HepG2 (cell line): ENCODE measurements at regions of chr5 and their contacts with region 1.

Region 1: DNA sequence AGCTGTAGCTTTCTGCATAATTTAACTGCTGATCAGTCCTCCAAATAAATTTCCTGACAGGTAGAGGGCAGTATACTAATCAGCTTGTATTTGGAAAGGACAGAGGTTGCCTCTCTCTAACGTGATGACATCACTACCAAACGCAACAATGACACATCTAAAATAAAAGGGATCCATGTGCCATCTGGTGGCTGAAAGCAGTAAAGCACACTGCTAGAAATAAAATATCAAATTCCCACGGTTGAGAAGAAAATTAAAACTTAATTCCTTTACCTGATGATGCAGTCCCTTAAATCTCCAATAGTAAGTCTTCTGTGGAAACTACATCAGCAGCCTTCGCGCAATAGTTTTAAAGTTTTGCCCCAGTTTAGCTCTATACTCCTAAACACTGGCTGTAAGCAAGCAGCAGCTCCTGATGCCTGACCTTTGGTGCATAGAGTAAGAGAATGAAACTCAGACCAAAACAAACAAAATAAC is 54.5 kb downstream of the DIAPH1 start:
- DNase-seq: peak; percentile 95
- ATAC-seq: peak; percentile 85
- H3K4me3 ChIP-seq: no peak overlapping the region
- H3K27ac ChIP-seq: peak overlapping the region; percentile 67
- H3K4me1 ChIP-seq: peaks cover 10% of the 10 kb centered on the region
- H3K27me3 ChIP-seq: no peaks in the 10 kb centered on the region
- CTCF ChIP-seq: peak; percentile 78
- EP300 ChIP-seq: no peak
- POLR2A ChIP-seq: no peak
- RAD21 ChIP-seq: peak; percentile 56; the same call in 1 of the 2 replicates

Region 2: DNA sequence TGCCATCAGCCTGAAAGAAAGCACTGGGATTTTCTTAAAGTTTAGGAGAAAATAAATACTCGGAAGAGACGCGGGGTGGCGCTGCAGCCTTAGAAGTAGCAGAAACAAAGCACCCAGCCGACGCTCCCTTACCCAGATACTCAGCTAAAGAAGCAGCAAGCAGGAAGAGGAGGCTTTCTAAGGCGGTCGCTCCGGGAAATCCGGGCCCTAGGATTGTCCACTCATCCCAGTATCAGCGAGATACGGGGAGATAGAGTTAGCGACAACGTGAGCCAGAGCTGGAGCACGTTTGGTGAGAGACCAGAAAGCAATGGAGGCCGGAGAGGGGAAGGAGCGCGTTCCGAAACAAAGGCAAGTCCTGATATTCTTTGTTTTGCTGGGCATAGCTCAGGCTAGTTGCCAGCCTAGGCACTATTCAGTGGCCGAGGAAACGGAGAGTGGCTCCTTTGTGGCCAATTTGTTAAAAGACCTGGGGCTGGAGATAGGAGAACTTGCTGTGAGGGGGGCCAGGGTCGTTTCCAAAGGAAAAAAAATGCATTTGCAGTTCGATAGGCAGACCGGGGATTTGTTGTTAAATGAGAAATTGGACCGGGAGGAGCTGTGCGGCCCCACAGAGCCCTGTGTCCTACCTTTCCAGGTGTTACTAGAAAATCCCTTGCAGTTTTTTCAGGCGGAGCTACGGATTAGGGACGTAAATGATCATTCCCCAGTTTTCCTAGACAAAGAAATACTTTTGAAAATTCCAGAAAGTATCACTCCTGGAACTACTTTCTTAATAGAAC is 469.6 kb before region 1 on chr5 and contains the start of gene PCDHB2:
- CTCF ChIA-PET with region 1: no interaction called
- POLR2A ChIA-PET with region 1: interaction called, 4 read pairs
- in situ Hi-C with region 1: loop called (anchors 10 kb)
- intact Hi-C with region 1: loop called (anchors 5 kb)
- DNase-seq: peak; percentile 79
- ATAC-seq: peak; percentile 98
- H3K4me3 ChIP-seq: peak within 1 kb of the TSS; percentile 55 to 89 (median 82)
- H3K27ac ChIP-seq: peak within 1 kb of the TSS; percentile 56
- H3K4me1 ChIP-seq: peaks cover 11% of the 10 kb centered on the region
- H3K27me3 ChIP-seq: no peaks in the 10 kb centered on the region; a peak in 1 of 5 replicates
- CTCF ChIP-seq: peak; percentile 87
- EP300 ChIP-seq: no peak
- POLR2A ChIP-seq: peak; percentile 59 to 69
- RAD21 ChIP-seq: peak; percentile 69
- total RNA-seq, gene PCDHB2: 3.6 and 7.1 TPM in 2 replicates

Region 3: DNA sequence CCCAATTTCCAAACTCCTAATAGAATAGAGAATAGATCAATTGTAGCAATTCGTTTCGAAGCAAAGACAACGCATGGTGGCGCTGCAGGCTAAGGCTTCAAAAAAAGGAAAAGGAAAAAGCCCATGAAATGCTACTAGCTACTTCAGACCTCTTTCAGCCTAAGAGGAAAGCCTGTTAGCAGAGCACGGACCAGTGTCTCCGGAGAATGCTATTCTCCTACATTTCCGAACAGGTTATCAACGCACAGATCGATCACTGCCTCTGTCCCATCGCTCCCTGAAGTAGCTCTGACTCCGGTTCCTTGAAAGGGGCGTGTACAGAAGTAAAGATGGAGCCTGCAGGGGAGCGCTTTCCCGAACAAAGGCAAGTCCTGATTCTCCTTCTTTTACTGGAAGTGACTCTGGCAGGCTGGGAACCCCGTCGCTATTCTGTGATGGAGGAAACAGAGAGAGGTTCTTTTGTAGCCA is 319.0 kb before region 1 on chr5 and contains the start of gene PCDHB15:
- CTCF ChIA-PET with region 1: interaction called, 12 read pairs
- POLR2A ChIA-PET with region 1: no interaction called
- in situ Hi-C with region 1: no loop called
- intact Hi-C with region 1: no loop called
- DNase-seq: peak; percentile 9
- ATAC-seq: peak; percentile 54
- H3K4me3 ChIP-seq: peak within 1 kb of the TSS; percentile 28 to 58 (median 36)
- H3K27ac ChIP-seq: no peak within 1 kb of the TSS
- H3K4me1 ChIP-seq: no peaks in the 10 kb centered on the region
- H3K27me3 ChIP-seq: no peaks in the 10 kb centered on the region; a peak in 1 of 5 replicates
- CTCF ChIP-seq: peak; percentile 56
- EP300 ChIP-seq: no peak
- POLR2A ChIP-seq: no peak
- RAD21 ChIP-seq: no peak
- total RNA-seq, gene PCDHB15: 0.22 and 0.27 TPM in 2 replicates

Region 4: DNA sequence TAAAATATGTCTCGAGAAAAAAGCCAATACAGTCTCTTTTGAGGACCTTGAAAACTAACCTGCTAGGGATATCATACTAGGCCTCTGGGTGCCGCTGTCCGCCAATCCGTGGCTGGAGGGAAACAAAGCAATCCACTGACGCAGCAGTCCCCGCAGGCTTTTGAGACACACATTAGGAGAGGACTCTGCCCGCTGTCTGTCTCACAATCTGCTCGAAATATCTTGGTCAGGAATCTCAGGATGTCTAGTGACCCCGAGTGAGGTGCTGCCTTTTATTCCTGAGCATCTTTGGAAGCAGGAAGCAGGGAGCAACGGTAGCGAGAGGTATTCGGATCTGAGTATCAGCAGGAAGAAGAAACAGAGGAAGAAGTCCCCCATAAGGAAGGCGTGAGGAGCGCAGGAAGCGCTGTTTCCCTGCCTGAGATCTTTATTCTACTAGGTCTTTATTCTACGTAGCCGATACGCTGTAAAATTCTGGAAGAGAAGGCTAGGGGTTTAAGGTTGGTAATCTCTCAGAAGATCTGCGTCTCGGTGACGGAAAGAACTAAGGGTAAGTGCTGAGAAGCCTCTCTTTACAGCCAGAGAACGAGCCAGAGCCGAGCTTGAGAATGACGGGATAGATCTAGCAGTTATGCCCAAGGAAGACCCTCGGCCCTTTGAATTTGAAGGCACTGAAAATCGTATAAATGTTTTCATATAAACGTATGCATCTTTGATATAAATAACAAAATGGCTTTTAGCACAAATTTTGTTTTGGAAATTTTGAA is 238.0 kb before region 1 on chr5:
- CTCF ChIA-PET with region 1: interaction called, 9 read pairs
- POLR2A ChIA-PET with region 1: interaction called, 12 read pairs
- in situ Hi-C with region 1: no loop called
- intact Hi-C with region 1: loop called (anchors 5 kb)
- DNase-seq: peak; percentile 58
- ATAC-seq: peak; percentile 89
- H3K4me3 ChIP-seq: peak overlapping the region; percentile 32 to 58 (median 54); a peak in 5 of 6 replicates
- H3K27ac ChIP-seq: no peak overlapping the region
- H3K4me1 ChIP-seq: peaks cover 18% of the 10 kb centered on the region
- H3K27me3 ChIP-seq: peaks cover 0 to 9% of the 10 kb centered on the region in 2 experiments; a peak in 2 of 5 replicates
- CTCF ChIP-seq: peak; percentile 77
- EP300 ChIP-seq: no peak
- POLR2A ChIP-seq: peak in 1 of 2 experiments; percentile 39; a peak in 1 of 4 replicates
- RAD21 ChIP-seq: 0 out of 2 replicates have a peak, but pooled peaks have one; percentile 24

Region 5: GRCh38 chr5:141412854-141413539 is 151.3 kb before region 1 on chr5 and contains the start of gene PCDHGA10:
- CTCF ChIA-PET with region 1: interaction called, 6 read pairs
- POLR2A ChIA-PET with region 1: no interaction called
- in situ Hi-C with region 1: loop called (anchors 5 kb)
- intact Hi-C with region 1: loop called (anchors 1 kb)
- DNase-seq: peak; percentile 15
- ATAC-seq: peak; percentile 75
- H3K4me3 ChIP-seq: no peak within 1 kb of the TSS
- H3K27ac ChIP-seq: no peak within 1 kb of the TSS
- H3K4me1 ChIP-seq: no peaks in the 10 kb centered on the region
- H3K27me3 ChIP-seq: no peaks in the 10 kb centered on the region
- CTCF ChIP-seq: peak; percentile 59
- EP300 ChIP-seq: no peak
- POLR2A ChIP-seq: no peak
- RAD21 ChIP-seq: no peak
- total RNA-seq, gene PCDHGA10: 0.06 and 0.18 TPM in 2 replicates

Region 6: DNA sequence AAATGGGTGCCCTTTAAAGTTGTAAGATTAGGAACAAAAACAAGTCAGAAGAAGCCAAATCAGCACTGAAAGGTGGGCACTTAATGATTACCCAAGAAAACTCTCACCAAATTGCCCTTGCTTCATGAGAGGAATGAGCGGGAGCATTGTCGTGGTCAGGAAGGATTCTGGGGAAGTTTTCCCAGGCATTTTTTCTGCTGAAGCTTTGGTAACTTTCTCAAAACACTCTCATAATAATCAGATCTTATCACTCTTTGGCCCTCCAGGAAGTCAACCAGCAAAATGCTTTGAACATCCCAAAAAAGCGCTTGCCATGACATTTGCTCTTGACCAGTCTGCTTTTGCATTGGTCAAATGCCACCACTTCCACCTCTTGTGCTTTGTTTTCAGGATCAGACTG is 98.9 kb before region 1 on chr5:
- CTCF ChIA-PET with region 1: no interaction called
- POLR2A ChIA-PET with region 1: no interaction called
- in situ Hi-C with region 1: no loop called
- intact Hi-C with region 1: no loop called
- DNase-seq: no peak
- ATAC-seq: no peak
- H3K4me3 ChIP-seq: no peak overlapping the region
- H3K27ac ChIP-seq: no peak overlapping the region
- H3K4me1 ChIP-seq: no peaks in the 10 kb centered on the region
- H3K27me3 ChIP-seq: no peaks in the 10 kb centered on the region; a peak in 1 of 5 replicates
- CTCF ChIP-seq: no peak
- EP300 ChIP-seq: no peak
- POLR2A ChIP-seq: no peak
- RAD21 ChIP-seq: no peak

Region 7: DNA sequence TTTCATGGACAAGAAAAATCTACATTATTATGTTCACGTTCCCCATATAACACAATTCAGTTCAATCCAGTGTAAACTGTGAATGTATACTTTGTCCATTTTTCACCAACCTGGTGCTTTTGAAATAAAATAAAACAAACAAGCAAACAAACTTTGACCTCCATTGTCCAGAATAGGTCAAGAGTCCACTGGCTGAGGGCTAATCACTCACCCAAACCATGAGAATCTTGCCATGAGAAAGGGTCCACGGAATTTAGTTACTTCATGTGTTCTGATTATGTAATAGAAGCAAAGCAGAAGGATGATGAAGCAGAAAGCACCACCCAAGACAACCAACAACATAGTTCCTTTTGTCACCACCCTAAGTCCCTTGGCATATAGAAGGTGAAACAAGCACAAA is 25.9 kb after region 1 on chr5:
- CTCF ChIA-PET with region 1: no interaction called
- POLR2A ChIA-PET with region 1: interaction called, 3 read pairs
- in situ Hi-C with region 1: no loop called
- intact Hi-C with region 1: loop called (anchors 1 kb)
- DNase-seq: peak; percentile 83
- ATAC-seq: peak; percentile 81
- H3K4me3 ChIP-seq: no peak overlapping the region; a peak in 1 of 6 replicates
- H3K27ac ChIP-seq: peak overlapping the region; percentile 84
- H3K4me1 ChIP-seq: peaks cover 43% of the 10 kb centered on the region
- H3K27me3 ChIP-seq: no peaks in the 10 kb centered on the region
- CTCF ChIP-seq: no peak
- EP300 ChIP-seq: peak in 1 of 2 experiments; percentile 80; a peak in 2 of 4 replicates
- POLR2A ChIP-seq: no peak
- RAD21 ChIP-seq: no peak